H1 (cell line): ENCODE measurements at regions of chr20 and their contacts with region 1.

Region 1: GRCh38 chr20:50533061-50533460 is 22.9 kb downstream of the PTPN1 start:
- DNase-seq: no peak
- H3K4me3 ChIP-seq: no peak overlapping the region
- H3K27ac ChIP-seq: no peak overlapping the region
- H3K4me1 ChIP-seq: no peaks in the 10 kb centered on the region
- H3K27me3 ChIP-seq: no peaks in the 10 kb centered on the region
- CTCF ChIP-seq: no peak
- EP300 ChIP-seq: no peak
- POLR2A ChIP-seq: no peak
- RAD21 ChIP-seq: no peak

Region 2: GRCh38 chr20:50450881-50451752 is 81.9 kb before region 1 on chr20:
- CTCF ChIA-PET with region 1: no interaction called
- POLR2A ChIA-PET with region 1: no interaction called
- DNase-seq: peak in 1 of 2 experiments; percentile 62
- H3K4me3 ChIP-seq: no peak overlapping the region; a peak in 1 of 8 replicates
- H3K27ac ChIP-seq: no peak overlapping the region
- H3K4me1 ChIP-seq: peaks cover 0 to 5% (median 3%) of the 10 kb centered on the region in 4 experiments; a peak in 4 of 7 replicates
- H3K27me3 ChIP-seq: no peaks in the 10 kb centered on the region
- CTCF ChIP-seq: no peak
- EP300 ChIP-seq: 0 out of 3 replicates have a peak, but pooled peaks of 1 of the 2 experiments have one; percentile 22
- POLR2A ChIP-seq: no peak
- RAD21 ChIP-seq: no peak; a peak in 1 of 4 replicates

Region 3: DNA sequence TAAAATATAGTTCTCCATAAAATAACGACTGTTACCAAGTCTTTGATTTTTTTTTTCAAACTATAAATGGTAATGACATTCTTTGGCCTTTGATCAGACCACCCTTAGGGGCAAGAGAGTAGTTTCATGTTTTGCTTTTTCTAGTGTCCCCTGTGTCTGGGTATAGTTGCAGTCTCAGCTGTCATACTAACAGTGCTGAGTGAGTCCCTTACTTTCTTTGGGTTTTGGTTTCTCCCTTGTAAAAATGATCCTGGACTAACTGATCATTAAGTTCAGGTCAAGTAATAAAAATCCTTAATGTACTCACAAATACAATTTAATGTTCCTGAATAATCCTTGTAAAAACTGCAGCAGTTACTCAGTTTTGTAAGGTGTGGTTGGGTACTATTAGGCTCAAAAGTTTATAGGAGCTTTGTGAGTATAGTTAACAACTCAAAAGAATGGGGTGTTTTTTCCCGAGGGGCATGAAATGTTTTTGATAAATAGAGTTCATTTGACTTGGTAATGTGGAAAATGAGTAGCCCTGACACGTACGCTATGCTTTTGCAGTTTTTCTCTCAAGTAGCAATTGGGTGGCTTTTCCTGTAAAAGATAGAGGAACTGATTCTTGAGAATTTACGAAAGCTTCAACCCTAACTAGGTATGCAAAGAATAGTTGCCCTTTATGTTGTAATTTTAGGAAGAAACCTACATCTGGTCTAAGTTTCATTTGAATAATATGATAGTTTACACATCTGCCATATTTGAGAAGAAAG is 16.7 kb before region 1 on chr20:
- CTCF ChIA-PET with region 1: interaction called, 6 read pairs
- POLR2A ChIA-PET with region 1: interaction called, 10 read pairs
- DNase-seq: no peak
- H3K4me3 ChIP-seq: no peak overlapping the region
- H3K27ac ChIP-seq: no peak overlapping the region
- H3K4me1 ChIP-seq: peaks cover 0 to under 1% (median 0%) of the 10 kb centered on the region in 4 experiments; a peak in 3 of 7 replicates
- H3K27me3 ChIP-seq: no peaks in the 10 kb centered on the region
- CTCF ChIP-seq: no peak
- EP300 ChIP-seq: no peak
- POLR2A ChIP-seq: no peak
- RAD21 ChIP-seq: no peak